GM12878 (cell line): ENCODE measurements at regions of chr7 and their contacts with region 1.

Region 1: GRCh38 chr7:100428967-100429636 is 529 bp upstream of the MEPCE start:
- DNase-seq: peak; percentile 96
- ATAC-seq: peak; percentile 68
- H3K4me3 ChIP-seq: peak overlapping the region; percentile 74
- H3K27ac ChIP-seq: peak overlapping the region; percentile 99
- H3K4me1 ChIP-seq: peaks cover 28% of the 10 kb centered on the region
- H3K27me3 ChIP-seq: no peaks in the 10 kb centered on the region
- CTCF ChIP-seq: no peak
- EP300 ChIP-seq: peak in 1 of 2 experiments; percentile 72; a peak in 2 of 4 replicates
- POLR2A ChIP-seq: peak; percentile 89
- RAD21 ChIP-seq: no peak

Region 2: GRCh38 chr7:100390286-100391009 is 38.7 kb before region 1 on chr7:
- CTCF ChIA-PET with region 1: no interaction called
- POLR2A ChIA-PET with region 1: interaction called, 11 read pairs
- RAD21 ChIA-PET with region 1: interaction called, 3 read pairs
- SMC1A ChIA-PET with region 1: no interaction called
- in situ Hi-C with region 1: no loop called
- intact Hi-C with region 1: no loop called
- DNase-seq: no peak
- ATAC-seq: no peak
- H3K4me3 ChIP-seq: no peak overlapping the region
- H3K27ac ChIP-seq: no peak overlapping the region
- H3K4me1 ChIP-seq: peaks cover 16% of the 10 kb centered on the region
- H3K27me3 ChIP-seq: no peaks in the 10 kb centered on the region
- CTCF ChIP-seq: no peak
- EP300 ChIP-seq: no peak
- POLR2A ChIP-seq: no peak
- RAD21 ChIP-seq: no peak

Region 3: DNA sequence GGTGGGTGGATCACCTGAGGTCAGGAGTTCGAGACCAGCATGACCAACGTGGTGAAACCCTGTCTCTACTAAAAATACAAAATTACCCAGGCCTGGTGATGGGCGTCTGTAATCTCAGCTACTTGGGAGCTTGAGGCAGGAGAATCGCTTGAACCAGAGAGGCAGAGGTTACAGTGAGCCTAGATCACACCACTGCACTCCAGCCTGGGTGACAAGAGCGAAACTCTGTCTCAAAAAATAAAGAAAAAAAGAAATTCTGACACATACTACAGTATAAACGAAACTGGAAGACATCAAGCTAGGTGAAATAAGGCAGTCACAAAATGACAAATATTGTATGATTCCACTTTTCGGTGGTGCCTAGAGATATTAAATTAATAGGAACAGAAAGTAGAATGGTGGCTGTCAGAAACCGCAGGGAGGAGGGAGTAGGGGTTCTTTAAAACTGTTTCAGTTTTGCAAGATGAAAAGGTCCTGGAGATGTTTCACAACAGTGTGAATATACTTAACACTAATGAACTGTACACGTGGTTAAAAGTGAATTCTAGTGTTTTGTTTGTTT is 32.6 kb before region 1 on chr7:
- CTCF ChIA-PET with region 1: no interaction called
- POLR2A ChIA-PET with region 1: interaction called, 8 read pairs
- RAD21 ChIA-PET with region 1: interaction called, 4 read pairs
- SMC1A ChIA-PET with region 1: no interaction called
- in situ Hi-C with region 1: no loop called
- intact Hi-C with region 1: loop called (anchors 1 kb)
- DNase-seq: peak; percentile 93
- ATAC-seq: peak; percentile 92
- H3K4me3 ChIP-seq: peak overlapping the region; percentile 43; the same call in 1 of the 2 replicates
- H3K27ac ChIP-seq: peak overlapping the region; percentile 72
- H3K4me1 ChIP-seq: peaks cover 33% of the 10 kb centered on the region
- H3K27me3 ChIP-seq: no peaks in the 10 kb centered on the region
- CTCF ChIP-seq: no peak
- EP300 ChIP-seq: peak; percentile 63 to 92; a peak in 2 of 4 replicates
- POLR2A ChIP-seq: no peak
- RAD21 ChIP-seq: no peak

Region 4: DNA sequence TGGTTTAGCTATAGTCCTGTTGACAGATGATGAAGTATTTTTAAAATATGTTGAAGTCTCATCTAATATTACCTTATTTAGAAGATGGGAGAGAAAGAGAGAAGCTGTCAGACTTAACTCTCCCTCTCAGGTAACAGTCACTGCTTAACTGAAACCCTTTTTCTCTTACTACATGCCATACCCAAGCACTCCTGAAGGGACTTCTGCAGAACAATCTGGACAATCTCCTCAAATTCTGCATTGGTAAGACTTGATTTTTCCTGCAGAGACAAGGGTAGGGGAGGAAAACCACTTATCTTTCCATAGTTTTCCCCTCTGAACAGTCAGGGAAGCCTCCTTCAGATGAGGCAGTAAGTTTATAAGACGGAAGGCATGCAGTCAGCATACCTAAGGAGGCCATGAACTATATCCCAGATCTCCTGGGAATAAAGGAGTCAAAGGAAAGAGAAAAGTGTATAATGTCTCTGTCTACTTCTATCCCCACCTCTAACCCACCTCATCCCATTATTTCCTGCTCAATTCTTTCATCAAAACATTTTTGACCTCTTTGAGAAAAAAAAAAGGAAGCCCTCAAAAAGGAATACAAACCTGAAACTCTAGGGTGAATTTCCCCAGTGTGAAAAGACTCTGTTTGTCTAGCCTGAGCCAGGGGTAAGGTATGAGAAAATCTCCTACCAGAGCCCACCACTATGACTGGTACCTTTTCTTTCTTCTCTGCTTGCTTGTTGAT is 10.0 kb before region 1 on chr7:
- CTCF ChIA-PET with region 1: interaction called, 4 read pairs
- POLR2A ChIA-PET with region 1: interaction called, 13 read pairs
- RAD21 ChIA-PET with region 1: interaction called, 13 read pairs
- SMC1A ChIA-PET with region 1: interaction called, 11 read pairs
- in situ Hi-C with region 1: no loop called
- intact Hi-C with region 1: no loop called
- DNase-seq: no peak
- ATAC-seq: peak; percentile 80
- H3K4me3 ChIP-seq: no peak overlapping the region
- H3K27ac ChIP-seq: peak overlapping the region; percentile 35; the same call in 1 of the 2 replicates
- H3K4me1 ChIP-seq: peaks cover 16% of the 10 kb centered on the region
- H3K27me3 ChIP-seq: no peaks in the 10 kb centered on the region
- CTCF ChIP-seq: peak in 2 of 3 experiments; percentile 2 to 18; a peak in 1 of 6 replicates
- EP300 ChIP-seq: no peak
- POLR2A ChIP-seq: no peak
- RAD21 ChIP-seq: no peak

Region 5: GRCh38 chr7:100444311-100445278 is 15.5 kb after region 1 on chr7:
- CTCF ChIA-PET with region 1: interaction called, 6 read pairs
- POLR2A ChIA-PET with region 1: interaction called, 13 read pairs
- RAD21 ChIA-PET with region 1: interaction called, 7 read pairs
- SMC1A ChIA-PET with region 1: interaction called, 6 read pairs
- in situ Hi-C with region 1: no loop called
- intact Hi-C with region 1: no loop called
- DNase-seq: no peak
- ATAC-seq: peak; percentile 70
- H3K4me3 ChIP-seq: no peak overlapping the region
- H3K27ac ChIP-seq: peak overlapping the region; percentile 3; the same call in 1 of the 2 replicates
- H3K4me1 ChIP-seq: peaks cover 14% of the 10 kb centered on the region
- H3K27me3 ChIP-seq: no peaks in the 10 kb centered on the region
- CTCF ChIP-seq: no peak
- EP300 ChIP-seq: no peak
- POLR2A ChIP-seq: no peak
- RAD21 ChIP-seq: no peak

Region 6: GRCh38 chr7:100803398-100804233 is 374.5 kb after region 1 on chr7:
- CTCF ChIA-PET with region 1: no interaction called
- POLR2A ChIA-PET with region 1: no interaction called
- RAD21 ChIA-PET with region 1: no interaction called
- SMC1A ChIA-PET with region 1: no interaction called
- in situ Hi-C with region 1: no loop called
- intact Hi-C with region 1: no loop called
- DNase-seq: peak; percentile 56
- ATAC-seq: peak; percentile 98
- H3K4me3 ChIP-seq: peak overlapping the region; percentile 53
- H3K27ac ChIP-seq: peak overlapping the region; percentile 80
- H3K4me1 ChIP-seq: peaks cover 15% of the 10 kb centered on the region
- H3K27me3 ChIP-seq: no peaks in the 10 kb centered on the region
- CTCF ChIP-seq: no peak
- EP300 ChIP-seq: no peak
- POLR2A ChIP-seq: peak; percentile 47; the same call in 1 of the 2 replicates
- RAD21 ChIP-seq: no peak